Thyroid gland (tissue), 4 donors: ENCODE measurements at regions of chr15 and their contacts with region 1.

Region 1: DNA sequence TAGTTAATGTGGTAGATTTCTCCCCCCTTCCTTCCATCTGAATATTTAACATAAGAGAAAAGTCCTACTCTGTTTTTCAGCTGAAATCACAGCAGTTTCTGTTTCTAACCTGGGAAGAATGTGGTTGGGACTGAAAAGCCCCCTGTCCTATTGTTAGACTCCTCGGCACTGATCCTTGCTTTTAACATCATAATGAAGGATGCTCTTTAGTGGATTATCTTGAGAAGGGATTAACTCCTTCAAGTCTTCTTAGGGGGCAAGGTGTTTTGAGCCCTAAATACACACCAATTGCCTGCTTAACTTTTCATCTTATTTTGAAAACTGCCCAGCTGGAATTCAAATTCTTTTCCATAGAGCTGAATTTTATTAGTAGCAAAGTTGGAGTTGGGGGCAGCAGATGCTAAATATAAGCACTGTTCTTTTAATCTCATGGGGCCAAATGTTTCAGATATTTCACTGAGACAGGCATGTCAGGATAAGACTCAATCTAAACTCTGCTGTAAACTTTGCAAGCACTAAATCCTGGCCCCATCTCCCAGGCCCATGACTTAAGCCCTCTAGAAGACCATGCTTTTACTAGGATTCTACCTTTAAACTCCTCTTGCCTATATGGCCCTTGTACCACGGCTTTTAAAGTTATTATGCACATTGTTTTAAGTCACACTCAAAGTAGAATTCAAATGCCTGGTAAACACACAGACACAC is 243.2 kb upstream of the NR2F2 start:
- DNase-seq: no peak
- H3K4me3 ChIP-seq: no peak overlapping the region
- H3K27ac ChIP-seq: no peak overlapping the region
- H3K4me1 ChIP-seq: no peaks in the 10 kb centered on the region
- H3K27me3 ChIP-seq: no peaks in the 10 kb centered on the region
- CTCF ChIP-seq: no peak
- POLR2A ChIP-seq: no peak

Region 2: DNA sequence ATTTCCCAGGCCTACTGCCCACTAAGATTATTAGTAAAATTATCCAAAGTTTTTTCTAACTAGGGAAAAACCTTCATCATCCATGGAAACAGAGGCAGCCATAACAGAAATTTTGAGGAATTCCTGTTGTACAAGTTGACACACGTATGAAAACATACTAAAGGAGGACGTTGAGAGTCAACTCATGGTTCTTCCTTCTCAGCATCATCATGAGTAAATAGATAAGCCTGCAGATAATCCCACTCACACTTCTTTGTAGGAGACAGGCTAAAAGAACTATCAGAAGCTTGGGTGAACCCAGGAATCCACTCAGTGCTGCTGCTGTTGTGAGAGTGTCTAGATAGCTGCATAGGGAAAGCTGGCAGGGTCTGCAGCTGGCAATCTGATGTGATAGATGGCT is 451.7 kb before region 1 on chr15:
- intact Hi-C with region 1: loop called (anchors 10 kb)
- DNase-seq: no peak
- H3K4me3 ChIP-seq: no peak overlapping the region
- H3K27ac ChIP-seq: no peak overlapping the region
- H3K4me1 ChIP-seq: no peaks in the 10 kb centered on the region
- H3K27me3 ChIP-seq: no peaks in the 10 kb centered on the region
- CTCF ChIP-seq: no peak
- POLR2A ChIP-seq: no peak

Region 3: GRCh38 chr15:95932676-95933075 is 154.7 kb before region 1 on chr15:
- intact Hi-C with region 1: no loop called
- DNase-seq: no peak
- H3K4me3 ChIP-seq: no peak overlapping the region
- H3K27ac ChIP-seq: no peak overlapping the region
- H3K4me1 ChIP-seq: no peaks in the 10 kb centered on the region
- H3K27me3 ChIP-seq: no peaks in the 10 kb centered on the region
- CTCF ChIP-seq: no peak
- POLR2A ChIP-seq: no peak